Activated CD4-positive, alpha-beta T cell treated with anti-CD3 and anti-CD28 coated beads for 36 hours (primary cell): ENCODE measurements at regions of chr6 and their contacts with region 1.

Region 1: DNA sequence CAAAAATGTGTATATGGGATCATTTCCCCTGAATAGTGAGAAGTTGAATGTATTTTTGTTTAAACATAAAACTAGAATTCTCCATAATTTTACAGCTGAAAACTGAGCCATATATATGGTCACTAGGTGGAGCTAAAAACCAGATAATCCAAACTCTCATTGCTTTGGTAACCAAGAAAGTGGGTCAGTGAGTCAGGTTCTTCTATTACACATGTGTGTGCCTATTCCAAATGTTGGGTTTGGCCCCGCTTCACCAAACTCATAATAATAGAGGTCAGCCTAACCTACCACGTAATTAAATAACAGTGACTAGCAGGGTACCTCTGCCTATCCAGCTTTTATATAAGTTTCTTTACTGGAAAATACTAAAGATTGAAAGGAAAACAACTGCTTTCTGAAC is 19.3 kb upstream of the RNGTT start:
- DNase-seq: peak; percentile 45
- ATAC-seq: peak; percentile 96
- H3K4me3 Mint-ChIP-seq: no peak overlapping the region
- H3K27ac Mint-ChIP-seq: no peak overlapping the region
- H3K4me1 Mint-ChIP-seq: no peaks in the 10 kb centered on the region
- H3K27me3 Mint-ChIP-seq: peaks cover 3% of the 10 kb centered on the region

Region 2: DNA sequence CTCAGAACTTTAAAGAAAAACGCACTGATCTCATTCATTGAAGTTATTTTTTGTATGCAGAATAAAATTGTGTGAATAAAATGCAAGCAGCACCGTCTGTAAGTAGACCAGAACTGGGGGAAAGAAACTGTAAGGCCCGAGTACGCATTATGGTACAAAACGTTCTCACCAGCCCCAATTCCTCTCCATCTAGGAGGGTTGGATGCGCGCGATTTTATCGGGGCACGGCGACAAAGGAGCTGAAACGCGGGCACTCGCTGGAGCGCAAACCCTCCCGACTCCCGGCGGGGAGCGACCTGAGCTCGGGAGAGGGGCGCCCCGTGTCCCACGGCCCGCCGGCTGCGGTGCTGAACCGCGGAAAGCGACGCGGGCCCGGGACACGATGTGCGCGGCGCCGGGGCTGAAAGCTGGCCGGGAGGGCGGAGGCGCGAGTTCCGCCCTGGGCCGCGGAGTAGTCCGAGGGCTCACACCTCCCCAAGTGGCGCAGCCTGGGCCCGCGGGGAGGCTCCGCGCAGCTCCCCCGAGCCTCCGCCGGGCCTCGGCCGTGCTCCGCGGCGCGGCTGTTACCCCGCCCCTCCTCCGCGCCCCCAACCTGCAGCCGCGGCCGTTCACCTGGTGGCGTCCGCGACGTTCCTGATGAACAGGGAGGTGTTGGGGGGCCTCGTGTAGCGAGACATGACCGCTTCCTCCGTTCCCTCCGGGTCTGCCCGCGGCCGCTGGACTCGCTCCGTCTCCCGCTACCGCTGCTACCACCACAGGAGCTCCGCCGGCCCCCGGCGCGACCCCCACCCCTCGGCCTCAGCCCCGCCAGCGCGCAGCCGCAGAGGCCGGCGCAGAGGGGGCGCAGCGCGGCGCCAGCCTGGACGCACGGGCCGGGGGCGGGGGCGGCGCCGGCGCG is 134.7 kb after region 1 on chr6 and contains the start of gene SRSF12:
- CTCF ChIA-PET with region 1: interaction called, 10 read pairs
- POLR2A ChIA-PET with region 1: no interaction called
- intact Hi-C with region 1: loop called (anchors 5 kb)
- DNase-seq: peak; percentile 53
- ATAC-seq: peak; percentile 89
- H3K4me3 Mint-ChIP-seq: peak within 1 kb of the TSS; percentile 74
- H3K27ac Mint-ChIP-seq: no peak within 1 kb of the TSS
- H3K4me1 Mint-ChIP-seq: peaks cover 6% of the 10 kb centered on the region
- H3K27me3 Mint-ChIP-seq: peaks cover 10% of the 10 kb centered on the region
- total RNA-seq, gene SRSF12: 0.26 to 0.27 TPM

Region 3: DNA sequence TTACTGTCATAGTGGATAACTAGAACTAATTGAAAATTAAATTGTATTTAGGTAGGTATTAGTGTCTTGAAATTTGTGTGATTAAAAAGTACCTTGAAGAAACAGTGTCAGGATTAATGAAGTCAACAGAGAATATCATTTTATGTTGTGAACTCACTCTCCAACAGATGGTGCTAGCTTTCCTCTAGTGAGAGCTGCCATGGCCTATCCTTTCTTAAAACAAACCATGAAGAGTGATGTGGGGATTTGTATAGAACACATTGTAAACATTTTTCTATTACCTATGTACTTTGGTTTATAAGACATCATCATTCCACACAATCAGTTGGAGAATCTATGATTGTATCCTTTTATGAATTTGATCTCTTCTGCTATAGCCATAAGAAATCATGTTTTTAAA is 139.9 kb after region 1 on chr6:
- CTCF ChIA-PET with region 1: interaction called, 10 read pairs
- POLR2A ChIA-PET with region 1: no interaction called
- intact Hi-C with region 1: loop called (anchors 5 kb)
- DNase-seq: no peak
- ATAC-seq: peak; percentile 71
- H3K4me3 Mint-ChIP-seq: no peak overlapping the region
- H3K27ac Mint-ChIP-seq: no peak overlapping the region
- H3K4me1 Mint-ChIP-seq: no peaks in the 10 kb centered on the region
- H3K27me3 Mint-ChIP-seq: no peaks in the 10 kb centered on the region

Region 4: DNA sequence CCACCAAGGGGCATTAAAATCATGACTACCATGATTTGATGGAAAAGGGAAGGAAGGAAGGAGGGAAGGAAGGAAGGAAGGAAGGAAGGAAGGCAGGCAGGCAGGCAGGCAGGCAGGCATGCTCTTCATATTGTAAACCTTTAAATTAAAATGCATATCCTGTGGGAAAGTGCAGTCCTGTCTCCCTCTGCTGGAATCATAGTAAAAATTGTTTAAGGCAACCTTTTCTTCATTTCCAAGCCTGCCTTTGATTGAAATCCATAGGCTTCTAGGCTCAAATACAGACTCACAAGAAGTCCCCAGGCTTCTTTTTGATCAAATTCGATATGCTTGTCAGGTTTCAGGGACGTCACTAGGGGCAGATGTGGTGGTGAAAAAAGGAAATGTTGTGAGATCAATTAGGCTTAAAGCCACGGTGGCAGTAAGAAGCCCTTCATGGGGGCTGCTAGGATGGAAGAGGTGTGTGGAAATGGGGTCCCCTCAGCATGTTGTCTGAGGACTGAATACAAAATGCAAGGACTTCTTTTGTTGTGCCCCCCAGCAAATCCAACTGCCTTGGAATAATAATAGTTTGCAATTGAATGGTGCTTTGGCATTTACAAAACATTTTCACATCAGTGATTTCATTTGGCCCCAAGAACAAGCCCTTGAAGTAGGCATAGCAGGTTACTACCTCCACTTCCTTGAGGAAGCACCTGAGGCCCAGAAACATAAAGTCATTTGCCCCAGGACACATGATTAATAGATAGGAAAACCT is 260.0 kb after region 1 on chr6:
- CTCF ChIA-PET with region 1: interaction called, 35 read pairs
- POLR2A ChIA-PET with region 1: no interaction called
- intact Hi-C with region 1: loop called (anchors 1 kb)
- DNase-seq: peak; percentile 14
- ATAC-seq: peak; percentile 49
- H3K4me3 Mint-ChIP-seq: no peak overlapping the region
- H3K27ac Mint-ChIP-seq: no peak overlapping the region
- H3K4me1 Mint-ChIP-seq: peaks cover 12% of the 10 kb centered on the region
- H3K27me3 Mint-ChIP-seq: peaks cover 6% of the 10 kb centered on the region

Region 5: GRCh38 chr6:89610149-89610642 is 627.5 kb after region 1 on chr6:
- CTCF ChIA-PET with region 1: no interaction called
- POLR2A ChIA-PET with region 1: no interaction called
- intact Hi-C with region 1: loop called in 1 of 2 experiments (anchors 2 kb)
- DNase-seq: peak; percentile 88
- ATAC-seq: peak; percentile 92
- H3K4me3 Mint-ChIP-seq: no peak overlapping the region
- H3K27ac Mint-ChIP-seq: no peak overlapping the region
- H3K4me1 Mint-ChIP-seq: no peaks in the 10 kb centered on the region
- H3K27me3 Mint-ChIP-seq: no peaks in the 10 kb centered on the region